Calu3 (cell line): ENCODE measurements at regions of chr11 and their contacts with region 1.

Region 1: GRCh38 chr11:57249384-57250319 is 12.6 kb upstream of the APLNR start:
- DNase-seq: peak; percentile 77
- H3K4me3 Mint-ChIP-seq: no peak overlapping the region
- H3K27ac Mint-ChIP-seq: no peak overlapping the region
- H3K4me1 Mint-ChIP-seq: peaks cover 18% of the 10 kb centered on the region
- H3K27me3 Mint-ChIP-seq: no peaks in the 10 kb centered on the region
- CTCF ChIP-seq: peak; percentile 58

Region 2: GRCh38 chr11:56624661-56625110 is 625.0 kb before region 1 on chr11:
- CTCF ChIA-PET with region 1: interaction called, 5 read pairs
- intact Hi-C with region 1: loop called (anchors 1 kb)
- DNase-seq: peak; percentile 51
- H3K4me3 Mint-ChIP-seq: no peak overlapping the region
- H3K27ac Mint-ChIP-seq: no peak overlapping the region
- H3K4me1 Mint-ChIP-seq: no peaks in the 10 kb centered on the region
- H3K27me3 Mint-ChIP-seq: peaks cover 13% of the 10 kb centered on the region
- CTCF ChIP-seq: peak; percentile 45

Region 3: GRCh38 chr11:56841210-56841810 is 408.3 kb before region 1 on chr11:
- CTCF ChIA-PET with region 1: interaction called, 145 read pairs
- intact Hi-C with region 1: loop called (anchors 1 kb)
- DNase-seq: peak; percentile 67
- H3K4me3 Mint-ChIP-seq: no peak overlapping the region
- H3K27ac Mint-ChIP-seq: peak overlapping the region; percentile 87
- H3K4me1 Mint-ChIP-seq: peaks cover 33% of the 10 kb centered on the region
- H3K27me3 Mint-ChIP-seq: no peaks in the 10 kb centered on the region
- CTCF ChIP-seq: peak; percentile 65

Region 4: DNA sequence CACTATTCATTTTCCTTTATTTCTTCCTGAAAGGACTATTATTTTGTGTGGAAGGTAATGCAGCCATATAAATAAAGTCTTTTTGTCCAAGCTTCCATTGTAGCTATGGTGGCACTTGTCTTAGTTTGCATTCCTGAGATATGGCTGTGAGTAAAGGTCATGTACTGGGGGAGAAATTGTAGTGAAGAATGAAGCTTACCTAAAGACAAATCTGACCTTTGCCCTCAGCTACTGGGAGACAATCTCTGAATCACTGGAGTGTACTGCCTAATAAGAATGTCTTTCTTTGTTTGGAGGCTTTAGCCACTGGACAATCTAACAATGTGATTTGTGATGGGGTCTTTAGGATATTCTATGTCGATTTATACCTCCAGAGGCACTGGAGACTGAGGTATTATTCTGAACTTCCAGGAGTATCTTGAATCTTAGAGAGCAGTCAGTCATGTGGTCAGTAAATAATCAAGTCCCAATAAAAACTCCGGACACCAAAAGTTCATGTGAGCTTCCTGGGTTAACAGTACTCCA is 300.6 kb before region 1 on chr11:
- CTCF ChIA-PET with region 1: no interaction called
- intact Hi-C with region 1: loop called (anchors 5 kb)
- DNase-seq: peak; percentile 6
- H3K4me3 Mint-ChIP-seq: no peak overlapping the region
- H3K27ac Mint-ChIP-seq: peak overlapping the region; percentile 65
- H3K4me1 Mint-ChIP-seq: peaks cover 20% of the 10 kb centered on the region
- H3K27me3 Mint-ChIP-seq: no peaks in the 10 kb centered on the region
- CTCF ChIP-seq: no peak

Region 5: DNA sequence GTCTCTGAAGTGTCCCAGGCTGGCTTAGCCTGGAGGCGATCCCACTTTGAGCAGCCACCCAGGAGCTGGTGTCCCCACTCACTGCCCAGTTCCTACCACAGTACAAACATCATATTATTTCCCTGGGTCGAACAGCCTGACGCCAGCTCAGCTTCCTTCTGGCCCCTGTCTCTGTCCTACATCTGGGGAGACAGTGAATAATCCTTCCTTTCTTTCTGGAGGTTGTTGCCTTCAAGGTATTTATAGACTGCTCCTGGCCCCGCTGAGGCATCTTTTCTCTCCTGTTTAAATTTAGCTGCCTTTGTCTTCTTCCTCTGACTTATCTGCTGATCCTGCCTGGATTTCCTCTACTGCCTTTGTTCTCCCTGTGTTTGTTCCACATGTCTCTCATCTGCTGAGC is 124.7 kb before region 1 on chr11:
- CTCF ChIA-PET with region 1: interaction called, 40 read pairs
- intact Hi-C with region 1: no loop called
- DNase-seq: no peak
- H3K4me3 Mint-ChIP-seq: no peak overlapping the region
- H3K27ac Mint-ChIP-seq: no peak overlapping the region
- H3K4me1 Mint-ChIP-seq: peaks cover 28% of the 10 kb centered on the region
- H3K27me3 Mint-ChIP-seq: no peaks in the 10 kb centered on the region
- CTCF ChIP-seq: no peak

Region 6: DNA sequence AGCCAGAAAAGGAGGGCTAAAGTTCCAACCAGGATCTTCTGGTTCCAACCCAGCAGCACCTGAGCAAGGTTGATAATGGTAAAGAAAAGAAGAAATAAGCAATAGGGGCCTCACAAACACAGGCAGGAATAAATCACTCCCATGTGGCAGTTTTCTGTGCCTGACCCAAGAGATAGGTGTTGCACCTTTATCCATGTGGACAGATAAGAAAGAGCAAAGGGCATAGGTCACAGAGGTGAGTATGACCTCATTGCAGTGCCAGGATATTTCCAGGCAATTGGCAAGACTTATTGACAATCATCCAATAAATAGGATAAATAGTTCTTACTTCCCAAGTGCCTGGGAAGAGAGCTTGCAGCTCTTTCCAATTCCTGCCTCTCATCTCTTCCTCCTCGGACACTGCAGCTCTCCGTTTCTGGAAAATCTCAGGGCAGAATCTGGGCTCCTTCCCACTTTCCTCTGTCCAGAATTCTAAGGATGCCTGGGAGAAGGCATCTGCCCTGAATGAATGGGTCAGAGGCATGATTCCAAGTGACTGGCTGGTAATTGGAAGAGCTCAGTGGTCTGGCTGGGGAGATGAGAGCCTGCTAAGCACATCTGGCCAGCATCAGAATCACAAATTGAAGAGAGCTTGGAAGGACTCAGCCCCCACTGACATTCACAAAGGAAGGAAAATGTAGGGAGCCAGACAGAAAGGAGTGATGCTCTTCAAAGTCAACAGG is 82.4 kb before region 1 on chr11:
- CTCF ChIA-PET with region 1: no interaction called
- intact Hi-C with region 1: no loop called
- DNase-seq: no peak
- H3K4me3 Mint-ChIP-seq: no peak overlapping the region
- H3K27ac Mint-ChIP-seq: no peak overlapping the region
- H3K4me1 Mint-ChIP-seq: no peaks in the 10 kb centered on the region
- H3K27me3 Mint-ChIP-seq: peaks cover 62% of the 10 kb centered on the region
- CTCF ChIP-seq: no peak

Region 7: DNA sequence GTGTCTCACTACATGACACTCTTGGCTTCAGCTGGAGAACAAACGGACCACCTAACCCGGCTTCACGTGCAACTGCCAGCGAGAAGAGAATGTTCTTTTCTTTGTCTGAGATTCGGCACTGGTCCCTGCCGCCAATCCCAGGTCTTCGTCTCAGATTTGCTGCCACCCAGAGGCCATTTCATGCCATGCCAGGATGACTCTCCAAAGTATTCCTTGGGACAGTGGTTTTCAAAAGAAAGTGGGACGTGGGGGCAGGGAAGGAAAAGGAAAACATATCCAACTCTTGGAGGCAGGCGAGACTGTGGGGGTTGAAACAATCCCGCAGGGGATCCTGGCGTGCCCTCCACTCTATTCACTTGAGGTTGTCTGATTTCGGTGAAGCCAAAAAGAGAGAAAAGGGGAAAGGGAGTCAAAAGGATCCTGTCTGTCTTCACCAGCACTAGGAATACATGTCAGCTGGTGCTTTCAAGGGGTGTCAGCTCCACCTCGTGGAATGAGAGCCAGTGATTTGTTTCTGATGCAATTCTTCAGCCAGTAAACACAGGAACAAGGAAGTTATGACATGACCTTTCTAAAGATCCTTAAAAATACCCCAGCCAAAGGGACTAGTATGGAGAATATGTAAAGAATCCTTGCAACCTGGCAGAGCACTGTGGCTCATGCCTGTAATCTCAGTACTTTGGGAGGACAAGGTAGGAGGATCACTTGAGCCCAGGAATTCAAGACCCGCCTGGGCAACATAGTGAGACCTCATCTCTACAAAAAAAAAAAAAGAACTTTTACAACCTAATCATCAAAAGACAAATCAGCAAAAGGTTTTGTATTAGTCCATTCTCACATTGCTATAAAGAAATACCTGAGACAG is 28.4 kb after region 1 on chr11:
- CTCF ChIA-PET with region 1: interaction called, 6 read pairs
- intact Hi-C with region 1: loop called (anchors 1 kb)
- DNase-seq: peak; percentile 79
- H3K4me3 Mint-ChIP-seq: peak overlapping the region; percentile 53
- H3K27ac Mint-ChIP-seq: peak overlapping the region; percentile 88
- H3K4me1 Mint-ChIP-seq: peaks cover 58% of the 10 kb centered on the region
- H3K27me3 Mint-ChIP-seq: no peaks in the 10 kb centered on the region
- CTCF ChIP-seq: peak; percentile 79